ENCODE measurements at regions of chr2 and their contacts with region 1.

Region 1: GRCh38 chr2:173075781-173076580 is at the start of gene MAP3K20:
- DNase-seq: peak; percentile 83 to 91
- ATAC-seq: peak; percentile 89
- H3K4me3 ChIP-seq: peak within 1 kb of the TSS; percentile 78 to 95
- H3K27ac ChIP-seq: peak within 1 kb of the TSS; percentile 97 to 98
- H3K4me1 ChIP-seq: peaks cover 3 to 18% of the 10 kb centered on the region in 2 donors
- H3K27me3 ChIP-seq: no peaks in the 10 kb centered on the region
- total RNA-seq, gene MAP3K20: 82.9 to 109 TPM

Region 2: GRCh38 chr2:172489681-172490080 is 586.3 kb before region 1 on chr2:
- intact Hi-C with region 1: no loop called
- DNase-seq: no peak
- ATAC-seq: no peak
- H3K4me3 ChIP-seq: no peak overlapping the region
- H3K27ac ChIP-seq: no peak overlapping the region
- H3K4me1 ChIP-seq: no peaks in the 10 kb centered on the region
- H3K27me3 ChIP-seq: no peaks in the 10 kb centered on the region

Region 3: DNA sequence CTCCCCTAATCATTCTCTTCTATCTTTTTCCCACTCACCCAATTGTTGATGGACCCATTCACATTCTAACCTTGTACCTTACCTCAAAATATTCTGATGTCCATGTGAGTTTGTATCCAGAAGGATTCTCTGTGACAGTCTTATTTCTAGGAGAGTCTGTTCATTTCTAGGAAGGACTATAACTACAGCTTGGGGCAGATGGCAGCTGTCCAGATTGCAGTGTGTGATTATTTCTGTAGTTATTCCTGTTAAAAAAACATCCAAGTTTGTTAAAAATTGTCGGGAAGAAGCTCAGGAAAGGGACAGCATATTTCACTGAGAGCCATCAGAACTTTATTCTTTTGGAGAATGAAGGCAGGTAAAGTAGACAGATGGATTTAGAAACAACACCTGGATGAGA is 197.7 kb before region 1 on chr2:
- intact Hi-C with region 1: no loop called
- DNase-seq: no peak
- ATAC-seq: no peak
- H3K4me3 ChIP-seq: no peak overlapping the region
- H3K27ac ChIP-seq: no peak overlapping the region
- H3K4me1 ChIP-seq: no peaks in the 10 kb centered on the region
- H3K27me3 ChIP-seq: no peaks in the 10 kb centered on the region

Region 4: DNA sequence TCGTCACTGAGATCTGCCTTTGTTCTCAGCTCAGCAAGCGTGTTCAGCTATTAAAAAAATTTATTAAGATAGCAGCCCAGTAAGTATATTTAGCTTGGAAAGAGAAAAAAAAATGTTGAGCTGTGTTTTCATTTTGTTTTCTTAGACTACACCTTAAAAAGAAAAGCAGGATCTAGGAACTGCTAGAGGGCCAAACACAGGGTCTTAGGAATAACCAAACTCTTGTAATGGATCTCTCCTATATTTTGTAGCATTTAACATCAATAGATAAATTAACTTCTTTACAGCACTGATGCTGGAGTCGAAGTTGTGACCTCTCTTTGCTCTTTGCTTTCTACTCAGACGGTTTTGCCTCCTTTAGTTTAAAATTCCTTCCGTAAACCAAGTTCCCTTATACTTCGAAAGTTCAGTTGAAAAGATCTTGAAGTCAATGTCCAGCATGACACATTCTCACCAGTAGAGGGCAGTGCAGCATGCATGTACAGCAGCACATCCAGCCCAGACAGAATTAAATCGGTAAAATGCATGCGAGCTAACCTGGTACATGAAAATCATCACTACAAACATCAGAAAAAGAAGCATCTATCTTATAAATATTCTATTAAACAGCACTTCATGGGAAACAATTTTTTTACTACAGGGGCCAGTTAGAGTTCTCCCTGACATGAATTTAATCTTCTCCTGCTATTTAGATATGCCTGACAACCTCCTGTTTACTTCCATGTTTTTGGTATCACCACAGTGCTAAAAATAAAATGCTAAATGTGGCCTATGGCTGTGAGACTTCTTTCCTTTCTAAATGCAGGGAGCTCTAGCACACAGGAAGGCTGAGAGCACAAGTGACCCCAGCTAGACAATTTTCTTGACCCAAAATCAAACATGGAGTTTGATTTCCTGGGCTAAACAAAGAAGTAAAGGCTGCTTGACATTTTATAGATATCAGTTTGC is 48.5 kb before region 1 on chr2:
- intact Hi-C with region 1: loop called in 1 of 2 experiments (anchors 5 kb)
- DNase-seq: peak; percentile 82 to 87
- ATAC-seq: peak; percentile 92
- H3K4me3 ChIP-seq: no peak overlapping the region
- H3K27ac ChIP-seq: peak overlapping the region; percentile 21 to 64
- H3K4me1 ChIP-seq: peaks cover 0 to 4% of the 10 kb centered on the region in 2 donors
- H3K27me3 ChIP-seq: no peaks in the 10 kb centered on the region

Region 5: GRCh38 chr2:173037245-173038120 is 38.5 kb before region 1 on chr2:
- intact Hi-C with region 1: loop called in 1 of 2 experiments (anchors 5 kb)
- DNase-seq: no peak
- ATAC-seq: no peak
- H3K4me3 ChIP-seq: no peak overlapping the region
- H3K27ac ChIP-seq: peak overlapping the region in 1 of 2 donors; percentile 51
- H3K4me1 ChIP-seq: peaks cover 0 to 4% of the 10 kb centered on the region in 2 donors
- H3K27me3 ChIP-seq: no peaks in the 10 kb centered on the region

Region 6: DNA sequence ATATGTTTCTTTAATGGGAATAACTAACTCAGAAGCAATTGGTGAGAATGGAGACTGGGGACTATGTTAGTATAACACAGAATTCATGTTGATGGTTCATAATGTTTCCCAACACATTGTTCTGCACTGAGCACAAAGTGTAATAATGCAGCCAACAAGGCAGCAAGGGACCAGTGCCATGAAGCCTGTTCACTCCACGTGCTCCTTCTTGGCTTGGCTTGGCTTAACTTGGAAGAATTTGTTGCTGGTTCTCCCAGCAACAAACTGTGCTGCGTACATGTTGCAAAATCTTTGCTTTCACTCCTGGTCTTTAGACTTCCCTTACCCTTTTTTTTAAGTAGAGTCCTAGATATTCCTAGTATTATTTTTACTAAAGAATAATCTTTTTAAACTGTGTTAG is 129.4 kb after region 1 on chr2:
- intact Hi-C with region 1: loop called (anchors 2 to 5 kb)
- DNase-seq: peak; percentile 85
- ATAC-seq: peak; percentile 95
- H3K4me3 ChIP-seq: no peak overlapping the region
- H3K27ac ChIP-seq: no peak overlapping the region
- H3K4me1 ChIP-seq: peaks cover 2 to 6% of the 10 kb centered on the region in 2 donors
- H3K27me3 ChIP-seq: no peaks in the 10 kb centered on the region

Region 7: DNA sequence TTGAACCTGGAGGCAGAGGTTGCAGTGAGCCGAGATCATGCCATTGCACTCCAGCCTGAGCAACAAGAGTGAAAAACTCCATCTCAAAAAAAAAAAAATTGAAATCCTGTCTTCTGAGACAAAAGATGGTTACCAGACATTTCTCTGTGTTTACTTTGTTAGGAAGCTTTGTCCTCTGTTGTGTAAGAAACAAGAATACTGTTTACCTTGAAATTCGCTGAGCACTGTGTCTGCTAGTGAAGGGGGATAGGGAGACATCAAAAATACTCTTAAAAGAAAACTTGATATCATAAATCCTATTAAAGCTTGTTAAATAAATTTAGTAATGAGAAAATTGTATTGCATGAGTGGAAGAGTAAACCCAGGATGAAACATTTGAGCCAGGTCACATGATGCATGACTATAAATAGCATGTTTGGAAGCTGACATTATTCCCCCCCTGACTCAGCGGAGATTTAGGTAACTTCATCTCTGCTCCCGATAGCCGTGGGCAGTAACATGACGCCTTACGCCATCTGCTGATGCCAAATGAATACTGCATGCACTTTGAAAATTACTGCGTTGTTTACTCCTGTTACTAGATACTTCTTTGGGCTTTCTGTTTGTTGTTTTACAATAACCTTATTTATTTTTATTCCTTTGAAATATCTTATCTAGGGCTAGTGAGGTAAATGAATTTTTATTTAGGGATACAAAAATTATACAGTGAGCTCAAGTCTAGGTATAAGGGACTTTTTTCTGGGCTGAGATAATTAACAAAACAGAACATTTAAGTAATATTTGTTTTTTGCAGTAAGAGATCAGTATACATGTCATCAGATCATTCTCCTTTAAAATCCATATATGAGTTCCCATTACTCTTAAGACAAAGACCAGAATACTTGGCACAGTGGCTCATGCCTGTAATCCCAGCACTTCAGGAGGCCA is 134.6 kb after region 1 on chr2:
- intact Hi-C with region 1: loop called (anchors 2 to 5 kb)
- DNase-seq: peak in 1 of 2 donors; percentile 56
- ATAC-seq: peak; percentile 94
- H3K4me3 ChIP-seq: no peak overlapping the region
- H3K27ac ChIP-seq: no peak overlapping the region
- H3K4me1 ChIP-seq: peaks cover 0 to 5% of the 10 kb centered on the region in 2 donors
- H3K27me3 ChIP-seq: no peaks in the 10 kb centered on the region

Measured in aorta (tissue), 5 donors.